CD4-positive, alpha-beta T cell (primary cell): ENCODE measurements at regions of chr2 and their contacts with region 1.

Region 1: GRCh38 chr2:240586198-240586918 is at the start of gene CAPN10:
- DNase-seq: peak; percentile 92 to 98 (median 95)
- ATAC-seq: peak; percentile 83
- H3K4me3 ChIP-seq: peak within 1 kb of the TSS; percentile 65
- H3K4me3 Mint-ChIP-seq: peak within 1 kb of the TSS; percentile 97
- H3K27ac ChIP-seq: peak within 1 kb of the TSS; percentile 90 to 97
- H3K27ac Mint-ChIP-seq: peak within 1 kb of the TSS; percentile 90
- H3K4me1 ChIP-seq: peaks cover 52% of the 10 kb centered on the region
- H3K4me1 Mint-ChIP-seq: peaks cover 50% of the 10 kb centered on the region
- H3K27me3 ChIP-seq: no peaks in the 10 kb centered on the region
- H3K27me3 Mint-ChIP-seq: no peaks in the 10 kb centered on the region
- CTCF ChIP-seq: no peak
- total RNA-seq, gene CAPN10: 40.6 to 42.1 TPM

Region 2: GRCh38 chr2:240434728-240435456 is 151.5 kb before region 1 on chr2:
- CTCF ChIA-PET with region 1: no interaction called
- POLR2A ChIA-PET with region 1: interaction called, 3 read pairs
- intact Hi-C with region 1: loop called in 1 of 2 experiments (anchors 5 kb)
- DNase-seq: peak; percentile 76 to 95 (median 89)
- ATAC-seq: peak; percentile 83
- H3K4me3 ChIP-seq: peak overlapping the region; percentile 51
- H3K4me3 Mint-ChIP-seq: peak overlapping the region; percentile 93
- H3K27ac ChIP-seq: no peak overlapping the region
- H3K27ac Mint-ChIP-seq: peak overlapping the region; percentile 61
- H3K4me1 ChIP-seq: peaks cover 25% of the 10 kb centered on the region
- H3K4me1 Mint-ChIP-seq: peaks cover 4% of the 10 kb centered on the region
- H3K27me3 ChIP-seq: peaks cover 22 to 27% of the 10 kb centered on the region in 2 experiments
- H3K27me3 Mint-ChIP-seq: peaks cover 22% of the 10 kb centered on the region
- CTCF ChIP-seq: no peak

Region 3: DNA sequence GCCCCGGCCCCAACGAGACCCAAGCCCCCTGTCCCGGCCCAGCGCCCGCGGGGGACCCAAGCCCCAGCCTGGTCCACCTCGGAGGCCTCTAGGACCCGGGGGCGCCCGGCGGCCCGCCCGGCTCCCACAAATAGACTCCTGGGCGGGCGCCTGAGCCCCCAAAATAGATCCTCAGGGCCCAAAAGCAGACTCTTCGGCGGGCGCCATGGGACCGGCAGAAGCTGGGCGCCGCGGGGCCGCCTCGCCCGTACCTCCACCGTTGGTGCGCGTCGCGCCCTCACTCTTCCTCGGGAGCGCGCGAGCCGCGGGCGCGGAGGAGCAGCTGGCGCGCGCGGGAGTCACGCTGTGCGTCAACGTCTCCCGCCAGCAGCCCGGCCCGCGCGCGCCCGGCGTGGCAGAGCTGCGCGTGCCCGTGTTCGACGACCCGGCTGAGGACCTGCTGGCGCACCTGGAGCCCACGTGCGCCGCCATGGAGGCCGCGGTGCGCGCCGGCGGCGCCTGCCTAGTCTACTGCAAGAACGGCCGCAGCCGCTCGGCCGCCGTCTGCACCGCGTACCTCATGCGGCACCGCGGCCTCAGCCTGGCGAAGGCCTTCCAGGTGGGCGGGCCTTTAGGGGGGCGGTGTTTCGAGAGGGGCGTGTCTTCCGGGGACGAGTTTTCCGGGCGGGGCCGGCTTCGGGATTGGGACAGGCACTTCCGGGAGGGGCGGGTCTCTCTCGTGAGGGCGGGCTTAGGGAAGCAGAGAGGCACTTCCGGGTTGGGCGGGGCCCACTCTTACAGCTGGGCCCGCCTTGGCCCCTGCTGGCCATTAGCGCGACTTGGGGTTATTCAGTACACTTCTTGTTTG is 25.7 kb before region 1 on chr2:
- CTCF ChIA-PET with region 1: interaction called, 40 read pairs
- POLR2A ChIA-PET with region 1: interaction called, 224 read pairs
- intact Hi-C with region 1: loop called in 1 of 2 experiments (anchors 1 kb)
- DNase-seq: peak in 13 of 14 experiments; percentile 99 to 100 (median 100)
- ATAC-seq: peak; percentile 50
- H3K4me3 ChIP-seq: peak overlapping the region; percentile 53
- H3K4me3 Mint-ChIP-seq: peak overlapping the region; percentile 90
- H3K27ac ChIP-seq: peak overlapping the region; percentile 62 to 95
- H3K27ac Mint-ChIP-seq: peak overlapping the region; percentile 98
- H3K4me1 ChIP-seq: peaks cover 87% of the 10 kb centered on the region
- H3K4me1 Mint-ChIP-seq: peaks cover 80% of the 10 kb centered on the region
- H3K27me3 ChIP-seq: no peaks in the 10 kb centered on the region
- H3K27me3 Mint-ChIP-seq: no peaks in the 10 kb centered on the region
- CTCF ChIP-seq: no peak

Region 4: GRCh38 chr2:240619506-240620148 is 33.3 kb after region 1 on chr2:
- CTCF ChIA-PET with region 1: interaction called, 3 read pairs
- POLR2A ChIA-PET with region 1: interaction called, 35 read pairs
- intact Hi-C with region 1: loop called in 1 of 2 experiments (anchors 2 kb)
- DNase-seq: peak in 2 of 14 experiments; percentile 3 to 27
- ATAC-seq: no peak
- H3K4me3 ChIP-seq: no peak overlapping the region
- H3K4me3 Mint-ChIP-seq: no peak overlapping the region
- H3K27ac ChIP-seq: peak overlapping the region in 1 of 2 donors; percentile 1
- H3K27ac Mint-ChIP-seq: no peak overlapping the region
- H3K4me1 ChIP-seq: peaks cover 51% of the 10 kb centered on the region
- H3K4me1 Mint-ChIP-seq: peaks cover 23% of the 10 kb centered on the region
- H3K27me3 ChIP-seq: no peaks in the 10 kb centered on the region
- H3K27me3 Mint-ChIP-seq: no peaks in the 10 kb centered on the region
- CTCF ChIP-seq: no peak

Region 5: GRCh38 chr2:240780023-240780700 is 193.8 kb after region 1 on chr2:
- CTCF ChIA-PET with region 1: no interaction called
- POLR2A ChIA-PET with region 1: no interaction called
- intact Hi-C with region 1: no loop called
- DNase-seq: no peak
- ATAC-seq: no peak
- H3K4me3 ChIP-seq: no peak overlapping the region
- H3K4me3 Mint-ChIP-seq: no peak overlapping the region
- H3K27ac ChIP-seq: no peak overlapping the region
- H3K27ac Mint-ChIP-seq: no peak overlapping the region
- H3K4me1 ChIP-seq: no peaks in the 10 kb centered on the region
- H3K4me1 Mint-ChIP-seq: no peaks in the 10 kb centered on the region
- H3K27me3 ChIP-seq: no peaks in the 10 kb centered on the region
- H3K27me3 Mint-ChIP-seq: no peaks in the 10 kb centered on the region
- CTCF ChIP-seq: no peak

Region 6: GRCh38 chr2:240832205-240832727 is 245.9 kb after region 1 on chr2:
- CTCF ChIA-PET with region 1: no interaction called
- POLR2A ChIA-PET with region 1: no interaction called
- intact Hi-C with region 1: loop called (anchors 2 to 10 kb)
- DNase-seq: peak; percentile 98 to 100 (median 99)
- ATAC-seq: peak; percentile 91
- H3K4me3 ChIP-seq: peak overlapping the region; percentile 43
- H3K4me3 Mint-ChIP-seq: peak overlapping the region; percentile 38
- H3K27ac ChIP-seq: no peak overlapping the region
- H3K27ac Mint-ChIP-seq: no peak overlapping the region
- H3K4me1 ChIP-seq: peaks cover 14% of the 10 kb centered on the region
- H3K4me1 Mint-ChIP-seq: no peaks in the 10 kb centered on the region
- H3K27me3 ChIP-seq: peaks cover 17 to 26% of the 10 kb centered on the region in 2 experiments
- H3K27me3 Mint-ChIP-seq: peaks cover 36% of the 10 kb centered on the region
- CTCF ChIP-seq: no peak

Region 7: GRCh38 chr2:241508240-241509154 is 922.1 kb after region 1 on chr2 and contains the start of gene STK25:
- CTCF ChIA-PET with region 1: no interaction called
- POLR2A ChIA-PET with region 1: no interaction called
- intact Hi-C with region 1: loop called in 1 of 2 experiments (anchors 2 kb)
- DNase-seq: peak; percentile 94 to 99 (median 98)
- ATAC-seq: peak; percentile 95
- H3K4me3 ChIP-seq: peak within 1 kb of the TSS; percentile 63
- H3K4me3 Mint-ChIP-seq: peak within 1 kb of the TSS; percentile 94
- H3K27ac ChIP-seq: peak within 1 kb of the TSS; percentile 18 to 77
- H3K27ac Mint-ChIP-seq: peak within 1 kb of the TSS; percentile 78
- H3K4me1 ChIP-seq: peaks cover 30% of the 10 kb centered on the region
- H3K4me1 Mint-ChIP-seq: peaks cover 15% of the 10 kb centered on the region
- H3K27me3 ChIP-seq: no peaks in the 10 kb centered on the region
- H3K27me3 Mint-ChIP-seq: no peaks in the 10 kb centered on the region
- CTCF ChIP-seq: no peak
- total RNA-seq, gene STK25: 76.1 to 81.3 TPM

Region 8: GRCh38 chr2:241686649-241687425 is 1100.5 kb after region 1 on chr2 and contains the start of gene DTYMK:
- CTCF ChIA-PET with region 1: no interaction called
- POLR2A ChIA-PET with region 1: interaction called, 4 read pairs
- intact Hi-C with region 1: loop called in 1 of 2 experiments (anchors 5 kb)
- DNase-seq: peak; percentile 89 to 98 (median 95)
- ATAC-seq: peak; percentile 90
- H3K4me3 ChIP-seq: peak within 1 kb of the TSS; percentile 84
- H3K4me3 Mint-ChIP-seq: peak within 1 kb of the TSS; percentile 95
- H3K27ac ChIP-seq: peak within 1 kb of the TSS; percentile 60 to 85
- H3K27ac Mint-ChIP-seq: peak within 1 kb of the TSS; percentile 84
- H3K4me1 ChIP-seq: peaks cover 37% of the 10 kb centered on the region
- H3K4me1 Mint-ChIP-seq: peaks cover 38% of the 10 kb centered on the region
- H3K27me3 ChIP-seq: no peaks in the 10 kb centered on the region
- H3K27me3 Mint-ChIP-seq: no peaks in the 10 kb centered on the region
- CTCF ChIP-seq: no peak
- total RNA-seq, gene DTYMK: 4.8 to 6.0 TPM